Pancreas (tissue), 10 donors: ENCODE measurements at regions of chr7 and their contacts with region 1.

Region 1: GRCh38 chr7:27576360-27576944 is 86.2 kb downstream of the HIBADH start:
- DNase-seq: no peak
- ATAC-seq: peak in 3 of 4 donors; percentile 63 to 75 (median 73)
- H3K4me3 ChIP-seq: no peak overlapping the region
- H3K27ac ChIP-seq: no peak overlapping the region
- H3K4me1 ChIP-seq: no peaks in the 10 kb centered on the region
- H3K27me3 ChIP-seq: no peaks in the 10 kb centered on the region
- CTCF ChIP-seq: peak; percentile 48 to 68 (median 57)

Region 2: DNA sequence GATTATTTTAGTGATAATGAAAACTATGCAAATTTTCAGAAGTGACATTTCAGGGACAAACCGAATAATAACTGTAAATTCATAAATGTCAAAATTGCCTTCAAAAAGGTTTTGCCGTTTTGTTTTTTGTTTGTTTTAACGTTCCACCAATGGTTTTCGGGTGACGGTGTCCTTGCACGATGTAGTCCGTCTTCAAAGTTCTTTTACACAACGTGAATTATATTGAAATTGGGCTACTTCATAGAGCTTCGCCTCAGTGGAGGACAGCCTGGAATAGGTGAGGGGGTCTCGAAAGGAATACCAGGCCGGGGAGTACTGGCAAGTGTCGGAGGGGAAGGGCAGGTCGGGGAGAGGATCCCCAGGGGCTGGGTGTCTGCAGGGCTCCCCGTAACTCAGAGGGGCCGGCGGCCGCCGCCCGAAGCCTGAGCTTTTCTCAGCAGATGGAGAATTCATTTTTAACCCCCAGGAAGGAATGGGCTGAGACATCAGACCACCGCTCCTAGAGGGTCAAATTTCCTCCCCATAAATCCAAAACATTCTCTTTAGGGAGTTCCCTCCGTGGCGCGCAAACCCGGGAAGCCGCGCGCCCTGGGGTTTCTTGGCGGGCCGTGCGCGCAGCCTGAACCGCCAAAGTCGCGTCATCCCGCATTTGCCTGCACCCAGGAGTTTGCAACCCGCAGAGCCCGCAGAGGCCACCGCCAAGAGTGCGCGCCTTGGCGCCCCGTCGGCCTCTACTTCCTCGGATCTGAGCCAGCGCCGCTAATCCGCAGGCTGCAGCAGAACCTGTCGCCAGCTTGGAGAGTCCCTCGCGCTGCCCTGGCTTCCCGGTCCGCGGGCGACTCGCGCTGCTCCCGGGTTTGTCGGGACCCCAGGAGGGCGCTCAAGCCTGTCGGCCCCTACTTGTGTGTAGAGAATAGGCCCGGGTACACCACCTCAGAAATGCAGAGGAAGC is 351.2 kb before region 1 on chr7:
- intact Hi-C with region 1: loop called in 1 of 3 experiments (anchors 10 kb)
- DNase-seq: no peak
- ATAC-seq: peak in 2 of 4 donors; percentile 40 to 68
- H3K4me3 ChIP-seq: no peak overlapping the region
- H3K27ac ChIP-seq: no peak overlapping the region
- H3K4me1 ChIP-seq: no peaks in the 10 kb centered on the region
- H3K27me3 ChIP-seq: peaks cover 3 to 48% (median 17%) of the 10 kb centered on the region in 4 donors
- CTCF ChIP-seq: no peak

Region 3: DNA sequence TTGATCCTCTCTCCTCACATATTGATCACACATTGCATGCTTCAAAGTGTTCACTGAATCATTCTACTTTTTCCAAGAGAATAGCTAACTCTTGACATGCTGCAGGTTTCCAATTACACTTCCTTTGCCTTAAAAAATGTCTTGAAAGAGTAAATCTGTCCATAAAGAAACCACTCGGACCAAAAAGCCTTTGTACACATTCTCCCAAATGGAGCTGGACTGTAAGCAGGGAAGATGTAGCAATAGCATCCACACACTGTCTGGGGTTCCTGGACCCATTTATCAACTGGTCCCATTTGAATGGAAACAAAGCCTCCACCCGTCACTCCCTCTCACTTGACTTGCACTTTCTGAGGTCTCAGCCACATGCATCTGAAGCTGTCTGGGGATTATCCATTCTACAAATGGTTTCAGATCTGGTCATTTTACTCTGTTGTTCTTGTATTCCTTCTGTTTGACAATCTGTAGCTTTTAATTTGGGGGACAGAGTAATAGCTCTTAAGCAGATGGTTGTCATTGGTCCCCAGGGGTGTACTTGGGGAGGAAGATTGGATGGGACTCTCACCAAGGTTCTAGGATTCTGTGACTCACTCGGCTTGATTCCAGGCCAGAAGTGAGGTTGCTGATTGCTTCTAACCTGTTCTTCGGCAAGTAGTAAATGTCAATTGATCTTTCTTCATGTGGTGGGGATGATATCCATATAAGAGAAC is 117.3 kb before region 1 on chr7:
- intact Hi-C with region 1: no loop called
- DNase-seq: no peak
- ATAC-seq: no peak
- H3K4me3 ChIP-seq: no peak overlapping the region
- H3K27ac ChIP-seq: no peak overlapping the region
- H3K4me1 ChIP-seq: no peaks in the 10 kb centered on the region
- H3K27me3 ChIP-seq: no peaks in the 10 kb centered on the region
- CTCF ChIP-seq: no peak